ENCODE measurements at regions of chr3 and their contacts with region 1.

Region 1: DNA sequence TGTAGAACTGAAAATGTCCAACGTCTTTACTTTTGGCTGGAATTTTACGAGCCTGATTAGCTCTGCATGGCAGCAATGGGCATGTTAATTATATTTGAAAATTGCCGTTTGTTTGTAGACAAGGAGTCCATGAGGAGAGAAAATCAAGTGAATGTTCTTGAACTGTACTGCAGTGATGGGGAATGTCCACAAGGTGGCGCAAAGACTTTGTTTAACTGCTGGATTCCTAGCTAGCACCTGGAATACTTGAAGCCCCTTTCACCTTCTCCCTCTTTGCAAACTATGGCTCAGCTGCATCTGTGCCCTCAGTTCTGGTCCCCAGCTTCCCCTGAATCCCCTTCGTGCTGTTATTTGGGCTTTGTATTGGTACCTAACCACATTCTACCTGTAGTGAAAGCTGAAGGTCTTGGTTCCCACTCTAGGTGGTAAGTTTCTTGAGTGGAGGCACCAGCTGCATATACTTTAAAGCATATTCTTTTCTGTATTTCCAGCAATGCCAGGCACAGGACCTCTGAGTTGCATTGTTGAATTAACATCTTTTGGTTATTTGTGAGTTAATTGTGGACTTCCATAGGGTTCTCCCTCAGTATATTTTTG is 25.3 kb downstream of the EXOG start:
- DNase-seq: peak; percentile 70
- H3K4me3 ChIP-seq: peak overlapping the region in 1 of 2 experiments; percentile 13; a peak in 1 of 4 replicates
- H3K27ac ChIP-seq: no peak overlapping the region
- H3K4me1 ChIP-seq: peaks cover 0 to 4% of the 10 kb centered on the region in 2 experiments; a peak in 3 of 4 replicates
- H3K27me3 ChIP-seq: no peaks in the 10 kb centered on the region
- CTCF ChIP-seq: peak; percentile 94
- EP300 ChIP-seq: no peak
- RAD21 ChIP-seq: peak; percentile 92

Region 2: DNA sequence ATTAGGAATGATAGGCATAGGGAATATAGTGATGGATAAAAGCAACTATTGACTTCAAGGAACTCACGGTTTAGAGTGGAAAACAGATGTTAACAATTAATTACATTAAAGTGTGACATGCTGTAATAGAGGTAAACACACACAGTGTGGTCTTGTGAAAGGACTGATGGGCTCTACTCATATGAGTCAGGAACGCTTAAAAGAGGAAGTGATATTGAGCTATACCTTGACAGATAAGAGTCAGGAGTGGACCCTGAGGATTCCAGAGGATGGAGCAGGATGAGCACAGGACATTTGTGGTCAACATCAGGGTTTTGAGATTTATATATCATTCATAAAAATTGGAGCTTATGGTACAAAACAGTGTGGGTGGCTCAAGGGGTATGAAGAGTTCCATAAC is 14.4 kb before region 1 on chr3:
- CTCF ChIA-PET with region 1: interaction called, 65 read pairs
- POLR2A ChIA-PET with region 1: no interaction called
- DNase-seq: no peak
- H3K4me3 ChIP-seq: no peak overlapping the region
- H3K27ac ChIP-seq: no peak overlapping the region
- H3K4me1 ChIP-seq: no peaks in the 10 kb centered on the region; a peak in 1 of 4 replicates
- H3K27me3 ChIP-seq: no peaks in the 10 kb centered on the region
- CTCF ChIP-seq: no peak
- EP300 ChIP-seq: no peak
- RAD21 ChIP-seq: no peak

Region 3: DNA sequence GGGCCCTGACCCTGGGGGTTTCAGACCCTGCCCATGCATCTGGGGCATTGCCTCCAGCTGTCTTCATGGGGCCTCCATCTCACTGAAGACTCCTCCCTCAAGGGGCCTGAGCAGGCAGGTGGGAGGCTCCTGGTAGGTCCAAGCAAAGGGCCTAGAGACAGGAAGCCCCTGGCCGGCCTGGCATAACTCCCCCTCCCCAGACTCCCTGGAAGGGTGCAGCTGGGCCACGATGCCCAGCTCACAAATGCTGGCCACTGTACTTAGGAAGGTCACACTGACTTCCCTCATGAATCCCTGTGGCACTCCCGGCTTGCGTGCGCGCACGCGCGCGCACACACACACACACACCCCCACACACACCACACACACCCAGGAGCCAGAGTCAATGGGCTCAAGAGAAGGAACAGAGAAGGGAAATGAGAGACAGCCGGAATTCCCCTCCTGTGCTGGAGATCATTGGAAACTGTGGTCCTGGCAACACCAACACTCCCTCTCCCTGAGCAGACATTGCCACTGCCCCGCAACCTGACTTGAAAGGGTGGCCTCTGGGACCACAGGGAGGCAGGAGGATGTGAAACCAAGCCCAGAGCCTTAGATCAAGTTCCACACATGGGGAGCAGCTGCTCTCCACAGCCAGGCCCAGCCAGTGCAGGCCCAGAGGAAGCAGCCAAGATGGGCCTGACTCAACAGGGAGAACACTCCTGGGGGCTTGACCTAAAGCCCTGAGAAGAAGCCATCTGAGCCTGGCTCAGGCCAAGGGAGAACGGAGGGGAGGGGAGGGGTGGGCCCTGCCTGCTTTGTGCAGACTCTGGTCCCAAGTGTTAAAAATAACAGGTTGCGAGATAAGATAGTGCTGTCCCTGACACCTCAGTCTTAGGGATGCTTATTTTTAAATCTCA is 58.3 kb after region 1 on chr3:
- CTCF ChIA-PET with region 1: interaction called, 36 read pairs
- POLR2A ChIA-PET with region 1: interaction called, 3 read pairs
- DNase-seq: peak; percentile 52
- H3K4me3 ChIP-seq: no peak overlapping the region
- H3K27ac ChIP-seq: peak overlapping the region in 1 of 2 experiments; percentile 93; a peak in 2 of 4 replicates
- H3K4me1 ChIP-seq: peaks cover 0 to 84% of the 10 kb centered on the region in 2 experiments; a peak in 2 of 4 replicates
- H3K27me3 ChIP-seq: no peaks in the 10 kb centered on the region
- CTCF ChIP-seq: no peak
- EP300 ChIP-seq: no peak
- RAD21 ChIP-seq: no peak

Region 4: GRCh38 chr3:38610436-38610835 is 88.9 kb after region 1 on chr3:
- CTCF ChIA-PET with region 1: interaction called, 20 read pairs
- POLR2A ChIA-PET with region 1: no interaction called
- DNase-seq: no peak
- H3K4me3 ChIP-seq: no peak overlapping the region
- H3K27ac ChIP-seq: no peak overlapping the region
- H3K4me1 ChIP-seq: no peaks in the 10 kb centered on the region
- H3K27me3 ChIP-seq: no peaks in the 10 kb centered on the region
- CTCF ChIP-seq: no peak
- EP300 ChIP-seq: no peak
- RAD21 ChIP-seq: no peak

Region 5: GRCh38 chr3:38669668-38670067 is 148.2 kb after region 1 on chr3:
- CTCF ChIA-PET with region 1: interaction called, 17 read pairs
- POLR2A ChIA-PET with region 1: no interaction called
- DNase-seq: no peak
- H3K4me3 ChIP-seq: no peak overlapping the region
- H3K27ac ChIP-seq: no peak overlapping the region
- H3K4me1 ChIP-seq: no peaks in the 10 kb centered on the region
- H3K27me3 ChIP-seq: no peaks in the 10 kb centered on the region; the same call in 1 of the 2 replicates
- CTCF ChIP-seq: no peak
- EP300 ChIP-seq: no peak
- RAD21 ChIP-seq: no peak

Region 6: DNA sequence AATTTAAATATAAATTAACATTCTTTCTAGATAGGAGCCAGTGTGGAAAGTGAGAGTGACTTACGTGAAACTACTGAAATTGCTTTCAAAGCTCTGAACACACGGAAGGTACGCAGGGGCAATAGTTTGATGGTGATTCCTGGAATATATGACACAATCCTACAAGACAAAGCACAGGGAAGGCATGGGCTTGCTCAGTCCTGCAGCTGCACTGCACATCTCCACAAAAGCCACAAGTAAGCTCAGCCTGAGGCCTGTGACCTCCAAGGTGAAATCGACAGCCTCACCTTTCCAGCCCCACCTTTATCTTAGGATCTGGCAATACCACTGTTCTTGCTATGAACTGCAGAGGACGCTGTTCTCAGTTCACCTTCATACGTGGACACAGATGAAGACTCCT is 403.9 kb after region 1 on chr3:
- CTCF ChIA-PET with region 1: no interaction called
- POLR2A ChIA-PET with region 1: no interaction called
- DNase-seq: no peak
- H3K4me3 ChIP-seq: no peak overlapping the region
- H3K27ac ChIP-seq: no peak overlapping the region
- H3K4me1 ChIP-seq: no peaks in the 10 kb centered on the region
- H3K27me3 ChIP-seq: no peaks in the 10 kb centered on the region; the same call in 1 of the 2 replicates
- CTCF ChIP-seq: no peak
- EP300 ChIP-seq: no peak
- RAD21 ChIP-seq: no peak

Measured in SK-N-SH (cell line).